ENCODE measurements at regions of chr2 and their contacts with region 1.

Region 1: GRCh38 chr2:109545828-109546713 is 67.7 kb downstream of the SEPTIN10 start:
- DNase-seq: no peak
- ATAC-seq: peak; percentile 92
- H3K4me3 ChIP-seq: no peak overlapping the region
- H3K27ac ChIP-seq: no peak overlapping the region
- H3K4me1 ChIP-seq: peaks cover 4% of the 10 kb centered on the region; the same call in 1 of the 2 replicates
- H3K27me3 ChIP-seq: no peaks in the 10 kb centered on the region
- CTCF ChIP-seq: peak; percentile 98

Region 2: GRCh38 chr2:109597283-109597682 is 51.2 kb after region 1 on chr2:
- CTCF ChIA-PET with region 1: no interaction called
- POLR2A ChIA-PET with region 1: no interaction called
- in situ Hi-C with region 1: no loop called
- intact Hi-C with region 1: loop called (anchors 5 kb)
- DNase-seq: no peak
- ATAC-seq: no peak
- H3K4me3 ChIP-seq: no peak overlapping the region
- H3K27ac ChIP-seq: no peak overlapping the region
- H3K4me1 ChIP-seq: peaks cover 4% of the 10 kb centered on the region; the same call in 1 of the 2 replicates
- H3K27me3 ChIP-seq: no peaks in the 10 kb centered on the region
- CTCF ChIP-seq: no peak

Region 3: DNA sequence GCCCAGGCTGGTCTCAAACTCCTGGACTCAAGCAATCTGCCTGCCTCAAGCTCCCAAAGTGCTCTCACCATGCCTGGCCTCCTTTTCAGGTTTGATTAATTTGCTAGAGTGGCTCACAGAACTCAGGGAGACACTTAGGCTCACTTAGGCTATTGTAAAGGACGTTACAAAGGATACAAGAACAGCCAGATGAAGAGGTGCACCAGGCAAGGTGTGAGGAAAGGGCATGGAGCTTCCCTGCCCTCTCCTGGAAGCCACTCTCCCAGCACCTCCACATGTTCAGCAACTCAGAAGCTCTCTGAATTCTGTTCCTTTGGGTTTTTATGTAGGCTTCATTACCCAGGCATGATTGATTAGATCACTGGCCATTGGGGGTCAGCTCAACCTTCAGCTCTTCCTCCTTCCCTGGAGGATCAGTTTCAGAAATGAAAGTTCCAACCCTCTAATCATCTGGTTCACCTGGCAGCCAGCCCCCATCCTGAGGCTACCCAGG is 169.3 kb after region 1 on chr2:
- CTCF ChIA-PET with region 1: interaction called, 6 read pairs
- POLR2A ChIA-PET with region 1: no interaction called
- in situ Hi-C with region 1: no loop called
- intact Hi-C with region 1: loop called (anchors 2 kb)
- DNase-seq: no peak
- ATAC-seq: peak; percentile 87
- H3K4me3 ChIP-seq: no peak overlapping the region
- H3K27ac ChIP-seq: no peak overlapping the region
- H3K4me1 ChIP-seq: no peaks in the 10 kb centered on the region
- H3K27me3 ChIP-seq: no peaks in the 10 kb centered on the region
- CTCF ChIP-seq: peak; percentile 87; the same call in 1 of the 2 replicates

Region 4: DNA sequence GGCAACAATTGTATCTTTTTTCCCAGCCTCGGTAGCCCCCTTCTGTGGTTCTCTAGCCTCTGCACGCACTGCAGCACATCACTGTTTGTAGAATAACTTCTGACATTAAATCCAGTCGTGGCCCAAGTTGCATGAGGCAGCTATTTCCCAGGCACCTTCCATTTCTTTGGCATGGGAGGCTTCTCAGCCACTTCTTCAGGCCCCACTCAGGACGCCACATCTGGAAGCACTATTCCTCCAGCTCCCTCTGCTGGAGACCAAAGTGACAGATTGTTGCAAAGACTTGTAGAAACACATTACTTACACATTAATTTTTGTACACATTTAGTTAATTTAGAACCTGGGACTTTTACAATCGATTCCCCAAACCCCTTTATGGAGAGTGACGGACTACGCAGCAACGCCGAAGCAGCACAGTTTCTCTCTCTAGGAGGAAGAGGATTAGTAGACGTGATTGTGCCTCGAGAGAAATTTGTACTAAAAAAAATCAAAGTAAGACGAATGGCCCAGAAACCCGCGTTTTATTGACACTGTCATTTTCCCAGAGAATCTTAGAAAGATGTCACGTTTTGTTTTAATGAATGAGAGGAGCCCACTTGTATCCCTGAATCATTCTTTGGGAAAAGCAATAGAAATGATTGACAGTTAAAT is 190.2 kb after region 1 on chr2:
- CTCF ChIA-PET with region 1: interaction called, 16 read pairs
- POLR2A ChIA-PET with region 1: interaction called, 11 read pairs
- in situ Hi-C with region 1: no loop called
- intact Hi-C with region 1: no loop called
- DNase-seq: no peak
- ATAC-seq: peak; percentile 94
- H3K4me3 ChIP-seq: 0 out of 4 replicates have a peak overlapping the region, but pooled peaks of 1 of the 2 experiments have one; percentile 2
- H3K27ac ChIP-seq: 0 out of 2 replicates have a peak overlapping the region, but pooled peaks have one; percentile 14
- H3K4me1 ChIP-seq: no peaks in the 10 kb centered on the region
- H3K27me3 ChIP-seq: no peaks in the 10 kb centered on the region
- CTCF ChIP-seq: peak; percentile 89